B cell (primary cell): ENCODE measurements at regions of chr6 and their contacts with region 1.

Region 1: DNA sequence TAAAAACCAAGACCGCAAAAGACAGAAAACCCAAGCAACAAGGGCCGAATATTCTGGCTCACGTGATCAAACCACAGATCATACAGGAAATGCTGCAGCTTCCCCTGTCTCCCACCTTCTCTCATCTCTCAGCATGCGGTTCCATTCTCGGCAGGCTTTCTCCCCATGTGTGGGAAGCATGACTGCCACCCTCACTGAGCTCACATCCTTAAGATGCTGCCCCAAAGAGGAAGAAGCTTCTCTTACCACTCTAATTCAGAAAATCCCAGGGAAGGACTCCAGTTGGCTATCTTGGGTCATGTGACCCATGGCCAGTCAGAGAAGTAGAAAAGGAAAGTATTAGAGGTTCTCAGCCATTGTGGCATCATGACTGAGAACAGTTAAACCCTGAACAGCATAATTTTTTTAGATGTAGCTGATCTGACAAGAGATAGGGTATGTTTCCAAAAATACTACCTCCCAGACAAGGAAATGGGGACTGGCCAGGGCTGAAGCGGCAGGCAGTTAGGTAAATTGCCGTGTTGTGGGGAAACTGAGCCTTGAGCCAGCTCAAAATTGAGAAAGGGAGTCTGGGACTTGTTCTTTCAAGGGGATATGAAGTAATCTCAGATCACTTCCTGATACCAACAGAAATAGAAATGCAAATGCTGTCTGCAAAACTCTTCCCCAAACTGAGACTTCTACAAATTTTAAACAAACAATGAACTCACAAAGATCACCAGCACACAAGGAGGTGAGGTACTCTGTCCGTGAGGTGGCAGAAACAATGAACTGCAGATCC is 37.1 kb upstream of the GRM4 start:
- DNase-seq: peak; percentile 78
- ATAC-seq: peak; percentile 76
- H3K4me3 ChIP-seq: peak overlapping the region in 4 of 5 experiments; percentile 25 to 50 (median 42)
- H3K4me3 Mint-ChIP-seq: peak overlapping the region; percentile 82
- H3K27ac ChIP-seq: peak overlapping the region; percentile 92 to 95
- H3K27ac Mint-ChIP-seq: peak overlapping the region; percentile 92
- H3K4me1 ChIP-seq: peaks cover 22 to 25% of the 10 kb centered on the region in 2 donors
- H3K4me1 Mint-ChIP-seq: peaks cover 24% of the 10 kb centered on the region
- H3K27me3 ChIP-seq: no peaks in the 10 kb centered on the region
- H3K27me3 Mint-ChIP-seq: no peaks in the 10 kb centered on the region
- CTCF ChIP-seq: no peak

Region 2: GRCh38 chr6:34154668-34155447 is 28.1 kb before region 1 on chr6:
- CTCF ChIA-PET with region 1: no interaction called
- POLR2A ChIA-PET with region 1: no interaction called
- intact Hi-C with region 1: no loop called
- DNase-seq: peak; percentile 76
- ATAC-seq: peak; percentile 94
- H3K4me3 ChIP-seq: peak overlapping the region in 3 of 5 experiments; percentile 33 to 39 (median 36)
- H3K4me3 Mint-ChIP-seq: peak overlapping the region; percentile 55
- H3K27ac ChIP-seq: no peak overlapping the region
- H3K27ac Mint-ChIP-seq: no peak overlapping the region
- H3K4me1 ChIP-seq: peaks cover 14 to 21% of the 10 kb centered on the region in 2 donors
- H3K4me1 Mint-ChIP-seq: peaks cover 16% of the 10 kb centered on the region
- H3K27me3 ChIP-seq: peaks cover 0 to 46% (median 18%) of the 10 kb centered on the region in 4 experiments
- H3K27me3 Mint-ChIP-seq: peaks cover 42% of the 10 kb centered on the region
- CTCF ChIP-seq: peak; percentile 99

Region 3: GRCh38 chr6:34526992-34527728 is 344.2 kb after region 1 on chr6:
- CTCF ChIA-PET with region 1: no interaction called
- POLR2A ChIA-PET with region 1: no interaction called
- intact Hi-C with region 1: loop called (anchors 10 kb)
- DNase-seq: peak; percentile 96
- ATAC-seq: peak; percentile 99
- H3K4me3 ChIP-seq: peak overlapping the region in 4 of 5 experiments; percentile 11 to 44 (median 30)
- H3K4me3 Mint-ChIP-seq: peak overlapping the region; percentile 71
- H3K27ac ChIP-seq: peak overlapping the region in 1 of 2 donors; percentile 22
- H3K27ac Mint-ChIP-seq: peak overlapping the region; percentile 78
- H3K4me1 ChIP-seq: peaks cover 7 to 13% of the 10 kb centered on the region in 2 donors
- H3K4me1 Mint-ChIP-seq: peaks cover 10% of the 10 kb centered on the region
- H3K27me3 ChIP-seq: no peaks in the 10 kb centered on the region
- H3K27me3 Mint-ChIP-seq: no peaks in the 10 kb centered on the region
- CTCF ChIP-seq: peak; percentile 65

Region 4: DNA sequence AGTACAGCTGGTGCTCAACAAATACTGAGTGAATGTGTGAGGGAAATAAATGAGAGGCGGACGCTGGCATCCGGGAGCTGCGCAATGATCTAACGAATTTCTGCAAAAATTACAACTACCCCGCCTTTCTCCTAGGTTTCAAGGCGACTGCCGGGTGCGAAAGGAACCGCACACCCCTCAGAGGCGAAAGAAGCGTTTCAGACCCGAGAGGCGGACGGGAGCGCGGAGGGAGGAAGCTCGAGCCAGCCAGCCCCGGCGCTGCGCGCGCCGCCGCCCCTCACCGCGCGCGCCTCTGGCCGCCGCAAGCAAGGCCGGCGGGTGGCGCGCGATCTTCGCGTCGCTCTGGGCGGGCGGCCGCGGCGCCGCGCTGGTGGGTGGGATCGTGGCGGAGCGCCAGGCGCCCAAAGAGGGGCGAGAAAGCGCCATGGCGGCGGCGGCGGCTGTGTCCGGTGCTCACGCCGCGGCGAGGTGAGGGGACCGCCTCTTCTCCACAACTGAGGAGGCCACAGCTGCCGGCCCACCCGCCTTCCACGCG is 608.8 kb after region 1 on chr6 and contains the start of gene BLTP3A:
- CTCF ChIA-PET with region 1: no interaction called
- POLR2A ChIA-PET with region 1: no interaction called
- intact Hi-C with region 1: loop called (anchors 5 kb)
- DNase-seq: peak; percentile 90
- ATAC-seq: peak; percentile 93
- H3K4me3 ChIP-seq: peak within 1 kb of the TSS; percentile 81 to 93 (median 90)
- H3K4me3 Mint-ChIP-seq: peak within 1 kb of the TSS; percentile 94
- H3K27ac ChIP-seq: peak within 1 kb of the TSS; percentile 71 to 83
- H3K27ac Mint-ChIP-seq: peak within 1 kb of the TSS; percentile 94
- H3K4me1 ChIP-seq: peaks cover 17 to 19% of the 10 kb centered on the region in 2 donors
- H3K4me1 Mint-ChIP-seq: peaks cover 22% of the 10 kb centered on the region
- H3K27me3 ChIP-seq: no peaks in the 10 kb centered on the region
- H3K27me3 Mint-ChIP-seq: no peaks in the 10 kb centered on the region
- CTCF ChIP-seq: no peak
- total RNA-seq, gene BLTP3A: 11.3 and 13.2 TPM in 2 replicates